AG04450 (cell line): ENCODE measurements at regions of chr12 and their contacts with region 1.

Region 1: DNA sequence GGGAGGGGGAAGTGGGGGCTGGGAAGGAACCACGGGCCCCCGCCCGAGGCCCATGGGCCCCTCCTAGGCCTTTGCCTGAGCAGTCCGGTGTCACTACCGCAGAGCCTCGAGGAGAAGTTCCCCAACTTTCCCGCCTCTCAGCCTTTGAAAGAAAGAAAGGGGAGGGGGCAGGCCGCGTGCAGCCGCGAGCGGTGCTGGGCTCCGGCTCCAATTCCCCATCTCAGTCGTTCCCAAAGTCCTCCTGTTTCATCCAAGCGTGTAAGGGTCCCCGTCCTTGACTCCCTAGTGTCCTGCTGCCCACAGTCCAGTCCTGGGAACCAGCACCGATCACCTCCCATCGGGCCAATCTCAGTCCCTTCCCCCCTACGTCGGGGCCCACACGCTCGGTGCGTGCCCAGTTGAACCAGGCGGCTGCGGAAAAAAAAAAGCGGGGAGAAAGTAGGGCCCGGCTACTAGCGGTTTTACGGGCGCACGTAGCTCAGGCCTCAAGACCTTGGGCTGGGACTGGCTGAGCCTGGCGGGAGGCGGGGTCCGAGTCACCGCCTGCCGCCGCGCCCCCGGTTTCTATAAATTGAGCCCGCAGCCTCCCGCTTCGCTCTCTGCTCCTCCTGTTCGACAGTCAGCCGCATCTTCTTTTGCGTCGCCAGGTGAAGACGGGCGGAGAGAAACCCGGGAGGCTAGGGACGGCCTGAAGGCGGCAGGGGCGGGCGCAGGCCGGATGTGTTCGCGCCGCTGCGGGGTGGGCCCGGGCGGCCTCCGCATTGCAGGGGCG is at the start of gene GAPDH:
- DNase-seq: peak; percentile 91
- H3K4me3 ChIP-seq: peak within 1 kb of the TSS; percentile 97
- H3K27ac ChIP-seq: peak within 1 kb of the TSS; percentile 95
- H3K27me3 ChIP-seq: no peaks in the 10 kb centered on the region
- CTCF ChIP-seq: 0 out of 2 replicates have a peak, but pooled peaks have one; percentile 1
- polyA plus RNA-seq, gene GAPDH: 9,160 and 11,356 TPM in 2 replicates

Region 2: DNA sequence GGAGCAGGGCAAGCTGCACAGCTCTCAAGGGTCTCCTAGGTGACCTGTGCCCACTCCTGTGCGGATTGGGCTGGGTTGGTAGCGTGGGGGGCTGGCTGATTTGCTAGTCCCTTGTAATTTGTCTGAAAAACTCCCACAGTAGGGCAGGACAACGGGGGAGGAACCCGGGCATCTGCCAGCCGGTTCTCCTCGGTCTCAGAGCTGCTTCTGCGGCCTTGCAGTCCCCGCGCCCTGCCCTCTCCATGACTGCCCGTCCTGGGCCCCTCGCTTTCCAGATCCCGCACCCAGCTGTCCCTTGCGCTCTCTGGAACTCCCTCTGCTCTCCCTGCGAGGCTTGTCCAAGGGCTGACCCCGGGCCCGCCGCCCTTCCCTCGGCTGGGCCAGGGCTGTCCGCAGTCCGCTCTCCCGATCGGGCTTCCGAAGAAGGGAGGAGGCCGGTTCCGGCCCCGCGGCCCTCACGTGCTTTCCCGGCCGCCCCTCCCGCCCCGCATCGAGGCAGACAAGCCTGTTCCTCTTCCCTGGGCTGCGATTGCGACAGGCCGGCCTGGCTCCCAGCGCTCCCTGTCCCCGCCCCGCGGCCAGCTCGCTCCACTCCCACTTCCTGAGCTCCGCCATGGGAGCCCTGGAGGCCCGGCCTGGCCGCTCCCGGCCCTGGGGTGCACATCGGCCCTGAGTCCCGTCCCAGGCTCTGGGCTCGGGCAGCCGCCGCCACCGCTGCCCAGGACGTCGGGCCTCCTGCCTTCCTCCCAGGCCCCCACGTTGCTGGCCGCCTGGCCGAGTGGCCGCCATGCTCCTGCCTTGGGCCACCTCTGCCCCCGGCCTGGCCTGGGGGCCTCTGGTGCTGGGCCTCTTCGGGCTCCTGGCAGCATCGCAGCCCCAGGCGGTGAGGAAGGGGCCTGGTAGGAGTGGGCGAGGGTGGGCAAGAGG is 150.3 kb before region 1 on chr12 and contains the start of gene LTBR:
- CTCF ChIA-PET with region 1: no interaction called
- POLR2A ChIA-PET with region 1: interaction called, 11 read pairs
- DNase-seq: peak; percentile 76
- H3K4me3 ChIP-seq: peak within 1 kb of the TSS; percentile 72
- H3K27ac ChIP-seq: peak within 1 kb of the TSS; percentile 94
- H3K27me3 ChIP-seq: no peaks in the 10 kb centered on the region
- CTCF ChIP-seq: 0 out of 2 replicates have a peak, but pooled peaks have one; percentile 12
- polyA plus RNA-seq, gene LTBR: 32.1 and 38.8 TPM in 2 replicates

Region 3: GRCh38 chr12:6554168-6555017 is 20.3 kb after region 1 on chr12:
- CTCF ChIA-PET with region 1: interaction called, 103 read pairs
- POLR2A ChIA-PET with region 1: interaction called, 218 read pairs
- DNase-seq: no peak
- H3K4me3 ChIP-seq: peak overlapping the region; percentile 84
- H3K27ac ChIP-seq: peak overlapping the region; percentile 39
- H3K27me3 ChIP-seq: no peaks in the 10 kb centered on the region
- CTCF ChIP-seq: peak; percentile 65

Region 4: GRCh38 chr12:6688999-6689882 is 155.1 kb after region 1 on chr12 and contains the start of gene ZNF384:
- CTCF ChIA-PET with region 1: interaction called, 3 read pairs
- POLR2A ChIA-PET with region 1: interaction called, 13 read pairs
- DNase-seq: peak; percentile 98
- H3K4me3 ChIP-seq: peak within 1 kb of the TSS; percentile 97
- H3K27ac ChIP-seq: peak within 1 kb of the TSS; percentile 90
- H3K27me3 ChIP-seq: no peaks in the 10 kb centered on the region
- CTCF ChIP-seq: peak; percentile 34; the same call in 1 of the 2 replicates
- polyA plus RNA-seq, gene ZNF384: 39.3 and 44.3 TPM in 2 replicates